HepG2 (cell line): ENCODE measurements at regions of chr1 and their contacts with region 1.

Region 1: GRCh38 chr1:236103646-236104218 is 38.6 kb upstream of the GPR137B start:
- DNase-seq: peak; percentile 42
- ATAC-seq: peak; percentile 33
- H3K4me3 ChIP-seq: no peak overlapping the region
- H3K27ac ChIP-seq: no peak overlapping the region
- H3K4me1 ChIP-seq: peaks cover 32% of the 10 kb centered on the region
- H3K27me3 ChIP-seq: peaks cover 2 to 5% of the 10 kb centered on the region in 2 experiments; a peak in 1 of 5 replicates
- CTCF ChIP-seq: peak; percentile 82
- EP300 ChIP-seq: no peak
- POLR2A ChIP-seq: no peak
- RAD21 ChIP-seq: peak; percentile 68

Region 2: GRCh38 chr1:236311040-236311439 is 207.3 kb after region 1 on chr1:
- CTCF ChIA-PET with region 1: no interaction called
- POLR2A ChIA-PET with region 1: no interaction called
- in situ Hi-C with region 1: no loop called
- intact Hi-C with region 1: loop called (anchors 1 kb)
- DNase-seq: peak; percentile 7
- ATAC-seq: peak; percentile 85
- H3K4me3 ChIP-seq: no peak overlapping the region
- H3K27ac ChIP-seq: no peak overlapping the region
- H3K4me1 ChIP-seq: no peaks in the 10 kb centered on the region
- H3K27me3 ChIP-seq: 0 out of 5 replicates have a peak, but pooled peaks cover 0 to 1% of the 10 kb centered on the region in 2 experiments
- CTCF ChIP-seq: peak; percentile 47
- EP300 ChIP-seq: no peak
- POLR2A ChIP-seq: no peak
- RAD21 ChIP-seq: no peak

Region 3: DNA sequence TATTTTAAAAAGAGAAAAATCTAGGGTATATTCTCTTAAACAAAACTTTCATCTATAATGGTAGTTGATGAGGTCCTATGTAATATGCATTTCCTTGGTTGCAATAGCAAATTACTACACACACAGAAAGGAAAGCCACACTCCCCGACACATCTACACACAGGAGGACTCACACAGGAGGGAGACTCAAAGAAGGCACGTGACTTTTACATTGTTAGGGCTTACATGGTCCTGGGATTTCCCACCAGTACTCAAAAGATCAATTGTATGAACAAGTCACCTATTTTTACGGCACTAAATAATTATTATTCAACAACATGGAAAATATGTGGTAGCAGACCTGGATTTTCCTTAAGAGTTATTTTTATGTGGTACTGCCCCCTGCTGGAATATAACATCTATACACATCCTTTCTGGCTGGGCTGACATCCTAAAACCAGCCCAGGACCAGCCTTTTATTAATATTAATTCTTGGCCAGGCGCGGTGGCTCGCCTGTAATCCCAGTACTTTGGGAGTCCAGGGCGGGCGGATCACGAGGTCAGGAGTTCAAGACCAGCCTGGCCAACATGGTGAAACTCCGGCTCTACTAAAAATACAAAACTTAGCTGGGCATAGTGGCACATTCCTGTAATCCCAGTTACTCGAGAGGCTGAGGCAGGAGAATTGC is 386.1 kb after region 1 on chr1:
- CTCF ChIA-PET with region 1: interaction called, 17 read pairs
- POLR2A ChIA-PET with region 1: no interaction called
- in situ Hi-C with region 1: loop called (anchors 5 kb)
- intact Hi-C with region 1: loop called (anchors 1 kb)
- DNase-seq: peak; percentile 74
- ATAC-seq: peak; percentile 23; the same call in 1 of the 3 replicates
- H3K4me3 ChIP-seq: peak overlapping the region; percentile 47 to 55 (median 51); a peak in 3 of 6 replicates
- H3K27ac ChIP-seq: peak overlapping the region; percentile 89
- H3K4me1 ChIP-seq: peaks cover 53% of the 10 kb centered on the region
- H3K27me3 ChIP-seq: no peaks in the 10 kb centered on the region
- CTCF ChIP-seq: peak; percentile 66
- EP300 ChIP-seq: no peak
- POLR2A ChIP-seq: no peak
- RAD21 ChIP-seq: no peak; the same call in 1 of the 2 replicates

Region 4: DNA sequence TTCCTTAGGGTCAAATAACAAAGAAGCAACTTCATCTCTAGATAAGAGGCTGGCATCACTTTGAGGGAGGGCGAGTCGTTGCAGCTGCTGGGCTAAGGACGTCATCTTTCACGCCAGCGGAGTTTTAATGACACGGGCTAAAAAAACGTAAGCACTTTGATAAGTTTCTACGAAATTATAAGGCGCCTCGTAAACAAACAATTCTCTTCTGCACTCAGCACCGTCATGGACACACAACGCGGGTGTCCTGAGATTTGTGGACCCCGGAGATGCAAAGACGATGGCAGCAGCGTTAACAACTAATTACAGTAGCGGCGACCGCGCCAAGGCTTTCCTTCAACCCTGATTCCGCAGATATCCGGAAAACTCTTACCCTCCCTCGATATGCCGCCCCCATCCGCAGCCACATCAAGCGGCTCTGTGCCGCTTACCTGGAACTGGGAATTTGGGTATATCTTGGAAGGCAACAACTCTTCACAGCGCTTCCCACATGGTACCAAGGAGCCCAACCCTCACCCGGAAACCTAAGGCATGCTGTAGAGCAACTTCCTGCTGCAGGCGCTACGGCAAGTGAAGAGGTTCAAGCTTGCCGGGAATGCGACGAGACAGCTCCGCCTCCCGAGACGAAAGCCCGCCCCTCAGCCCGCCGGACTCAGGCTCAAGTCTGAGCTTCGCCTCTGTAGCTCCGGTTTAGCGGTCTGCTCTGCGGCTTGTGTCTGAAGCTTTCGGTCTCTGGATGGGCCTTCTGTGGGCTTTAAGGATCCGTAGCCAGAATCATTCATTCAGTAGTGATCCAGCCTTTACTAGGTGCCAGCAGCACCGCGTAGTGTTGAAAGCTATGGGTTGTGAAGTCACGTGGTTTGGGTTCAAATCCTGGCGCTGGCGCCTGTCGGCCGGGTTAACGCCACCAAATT is 500.5 kb after region 1 on chr1 and contains the start of gene HEATR1:
- CTCF ChIA-PET with region 1: no interaction called
- POLR2A ChIA-PET with region 1: no interaction called
- in situ Hi-C with region 1: no loop called
- intact Hi-C with region 1: loop called (anchors 5 kb)
- DNase-seq: peak; percentile 90
- ATAC-seq: peak; percentile 99
- H3K4me3 ChIP-seq: peak within 1 kb of the TSS; percentile 75 to 87 (median 82)
- H3K27ac ChIP-seq: peak within 1 kb of the TSS; percentile 54
- H3K4me1 ChIP-seq: peaks cover 15% of the 10 kb centered on the region
- H3K27me3 ChIP-seq: no peaks in the 10 kb centered on the region; a peak in 1 of 5 replicates
- CTCF ChIP-seq: no peak
- EP300 ChIP-seq: no peak; a peak in 1 of 4 replicates
- POLR2A ChIP-seq: peak; percentile 85
- RAD21 ChIP-seq: no peak
- total RNA-seq, gene HEATR1: 45.8 and 80.3 TPM in 2 replicates

Region 5: DNA sequence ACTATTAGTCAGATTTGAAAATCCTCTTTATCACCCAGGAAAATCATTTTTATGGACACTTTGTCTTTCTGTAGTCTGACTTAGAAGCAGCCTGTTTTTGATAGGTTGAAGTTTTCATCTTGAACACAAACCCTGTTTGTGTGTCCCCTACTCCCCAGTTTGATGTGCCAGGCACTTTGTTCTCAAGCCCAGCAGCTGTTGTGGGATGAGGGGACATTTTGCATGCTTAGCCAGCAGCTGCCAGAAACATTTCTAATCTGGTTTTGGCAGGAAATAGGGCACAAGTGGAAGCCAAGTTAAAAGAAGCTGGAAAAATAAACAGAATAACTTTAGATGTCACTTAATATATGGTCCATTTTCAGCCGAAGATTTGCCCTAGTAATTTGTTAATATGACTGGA is 612.4 kb after region 1 on chr1:
- CTCF ChIA-PET with region 1: no interaction called
- POLR2A ChIA-PET with region 1: no interaction called
- in situ Hi-C with region 1: no loop called
- intact Hi-C with region 1: no loop called
- DNase-seq: no peak
- ATAC-seq: no peak
- H3K4me3 ChIP-seq: no peak overlapping the region
- H3K27ac ChIP-seq: no peak overlapping the region
- H3K4me1 ChIP-seq: no peaks in the 10 kb centered on the region
- H3K27me3 ChIP-seq: peaks cover 0 to 4% of the 10 kb centered on the region in 2 experiments; a peak in 1 of 5 replicates
- CTCF ChIP-seq: no peak
- EP300 ChIP-seq: no peak
- POLR2A ChIP-seq: no peak
- RAD21 ChIP-seq: no peak

Region 6: GRCh38 chr1:236868625-236869467 is 765.1 kb after region 1 on chr1:
- CTCF ChIA-PET with region 1: no interaction called
- POLR2A ChIA-PET with region 1: no interaction called
- in situ Hi-C with region 1: loop called (anchors 10 kb)
- intact Hi-C with region 1: no loop called
- DNase-seq: peak; percentile 60
- ATAC-seq: peak; percentile 93
- H3K4me3 ChIP-seq: no peak overlapping the region
- H3K27ac ChIP-seq: no peak overlapping the region
- H3K4me1 ChIP-seq: peaks cover 5% of the 10 kb centered on the region; the same call in 1 of the 2 replicates
- H3K27me3 ChIP-seq: no peaks in the 10 kb centered on the region
- CTCF ChIP-seq: peak; percentile 88
- EP300 ChIP-seq: no peak
- POLR2A ChIP-seq: no peak
- RAD21 ChIP-seq: peak; percentile 82

Region 7: DNA sequence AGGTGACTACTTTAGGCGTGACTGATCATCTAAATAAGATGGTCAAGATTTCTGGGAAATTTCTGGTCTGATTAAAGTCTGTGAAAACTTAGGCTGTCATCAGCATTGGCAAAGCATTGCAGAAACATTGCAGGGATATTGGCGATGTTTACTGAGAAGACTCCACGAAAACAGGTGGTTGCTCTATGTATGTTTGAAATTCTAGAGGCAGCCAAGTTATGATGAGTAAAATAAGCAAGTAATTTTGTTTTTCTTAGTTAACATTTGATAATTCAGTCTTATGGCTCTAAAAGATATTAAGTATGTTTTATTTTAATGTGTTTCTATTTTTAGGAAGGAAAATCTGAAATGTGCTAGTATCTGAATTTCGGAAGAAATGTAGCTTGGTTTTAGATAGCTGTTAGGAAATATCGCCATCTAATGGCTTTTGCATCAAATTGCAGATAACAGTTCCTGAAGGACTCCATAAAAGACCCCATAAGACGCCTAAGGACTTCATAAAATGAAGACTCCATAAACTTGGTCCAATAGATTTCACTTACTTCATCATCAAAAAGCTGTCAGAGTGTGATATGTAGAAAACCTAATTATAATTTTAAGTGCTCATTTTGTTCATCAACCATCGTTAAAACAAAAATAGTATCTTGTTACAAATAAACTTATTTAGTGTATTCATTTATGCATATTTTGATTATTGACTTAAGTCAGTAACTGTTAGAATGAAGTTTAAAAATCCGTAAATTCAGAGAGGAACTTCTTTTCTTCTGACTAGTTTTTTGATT is 1282.8 kb after region 1 on chr1:
- CTCF ChIA-PET with region 1: no interaction called
- POLR2A ChIA-PET with region 1: no interaction called
- in situ Hi-C with region 1: loop called (anchors 25 kb)
- intact Hi-C with region 1: loop called (anchors 5 kb)
- DNase-seq: peak; percentile 17
- ATAC-seq: peak; percentile 30; the same call in 1 of the 3 replicates
- H3K4me3 ChIP-seq: no peak overlapping the region
- H3K27ac ChIP-seq: no peak overlapping the region
- H3K4me1 ChIP-seq: no peaks in the 10 kb centered on the region
- H3K27me3 ChIP-seq: peaks cover 0 to 2% of the 10 kb centered on the region in 2 experiments; a peak in 1 of 5 replicates
- CTCF ChIP-seq: peak; percentile 62
- EP300 ChIP-seq: no peak
- POLR2A ChIP-seq: no peak
- RAD21 ChIP-seq: peak; percentile 35; the same call in 1 of the 2 replicates